CD8-positive, alpha-beta memory T cell (primary cell): ENCODE measurements at regions of chr2 and their contacts with region 1.

Region 1: DNA sequence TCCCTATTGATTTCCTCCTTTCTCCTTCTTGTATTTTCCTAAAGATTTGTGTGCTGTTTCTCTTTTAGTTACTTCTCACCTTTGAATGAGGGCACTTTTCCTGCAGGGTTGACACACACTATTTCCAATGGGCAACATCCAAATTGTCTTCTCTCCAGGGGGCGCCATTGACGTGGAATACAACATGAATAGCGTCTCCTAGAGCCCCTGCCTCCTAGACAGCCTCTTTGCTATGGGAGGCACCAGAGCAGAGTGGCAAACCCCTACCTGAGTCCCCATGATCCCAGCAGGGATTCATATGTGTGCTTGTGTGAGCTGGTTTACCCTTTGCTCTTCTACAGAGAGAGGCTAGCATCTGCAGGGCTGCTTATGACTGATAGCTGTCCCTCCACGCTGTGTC is 61.3 kb upstream of the ITSN2 start:
- DNase-seq: peak; percentile 22 to 66 (median 25)
- H3K4me3 ChIP-seq: no peak overlapping the region
- H3K4me3 Mint-ChIP-seq: no peak overlapping the region
- H3K27ac ChIP-seq: no peak overlapping the region
- H3K27ac Mint-ChIP-seq: no peak overlapping the region
- H3K4me1 ChIP-seq: no peaks in the 10 kb centered on the region
- H3K4me1 Mint-ChIP-seq: no peaks in the 10 kb centered on the region
- H3K27me3 ChIP-seq: no peaks in the 10 kb centered on the region
- H3K27me3 Mint-ChIP-seq: no peaks in the 10 kb centered on the region

Region 2: DNA sequence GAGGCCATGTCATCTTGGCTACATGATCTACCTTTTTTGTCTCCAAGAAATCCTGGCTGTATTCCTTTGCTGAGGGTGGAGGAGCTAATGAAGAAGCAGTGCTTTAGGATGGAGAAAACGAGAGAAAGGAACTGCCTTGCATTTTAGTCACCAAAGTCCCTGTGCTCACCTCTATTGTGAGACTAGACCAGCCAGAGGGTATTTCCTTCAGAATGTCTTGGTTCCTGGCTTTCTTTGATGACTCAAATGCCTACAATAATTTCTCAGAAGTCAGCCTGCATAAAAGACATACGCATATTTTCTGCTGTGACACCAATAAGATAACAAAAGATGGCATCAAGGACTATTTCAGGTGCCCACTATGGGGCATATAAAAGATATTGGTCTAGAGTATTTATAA is 356.3 kb before region 1 on chr2:
- CTCF ChIA-PET with region 1: no interaction called
- POLR2A ChIA-PET with region 1: interaction called, 12 read pairs
- DNase-seq: no peak
- H3K4me3 ChIP-seq: no peak overlapping the region
- H3K4me3 Mint-ChIP-seq: no peak overlapping the region
- H3K27ac ChIP-seq: no peak overlapping the region
- H3K27ac Mint-ChIP-seq: peak overlapping the region in 1 of 8 donors; percentile 50
- H3K4me1 ChIP-seq: no peaks in the 10 kb centered on the region
- H3K4me1 Mint-ChIP-seq: no peaks in the 10 kb centered on the region
- H3K27me3 ChIP-seq: no peaks in the 10 kb centered on the region
- H3K27me3 Mint-ChIP-seq: no peaks in the 10 kb centered on the region

Region 3: DNA sequence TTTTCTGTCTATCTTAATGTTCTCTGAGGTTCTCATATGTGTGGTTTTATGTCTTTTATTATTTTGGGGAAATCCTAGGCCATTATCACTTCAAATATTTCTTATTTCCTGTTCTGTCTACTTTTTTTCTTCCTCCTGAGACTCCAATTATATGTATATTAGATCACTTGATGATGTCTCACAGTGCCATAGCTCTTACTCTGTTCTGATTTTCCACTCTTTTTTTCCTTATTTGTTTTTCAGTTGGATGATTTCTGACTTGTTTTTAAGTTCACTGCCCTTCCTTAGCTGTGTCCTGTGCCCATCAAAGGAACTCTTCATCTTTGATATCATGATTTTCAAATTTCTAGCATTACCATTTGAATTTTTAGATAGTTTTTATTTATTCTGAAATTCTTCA is 274.3 kb before region 1 on chr2:
- CTCF ChIA-PET with region 1: no interaction called
- POLR2A ChIA-PET with region 1: no interaction called
- DNase-seq: no peak
- H3K4me3 ChIP-seq: no peak overlapping the region
- H3K4me3 Mint-ChIP-seq: no peak overlapping the region
- H3K27ac ChIP-seq: no peak overlapping the region
- H3K27ac Mint-ChIP-seq: no peak overlapping the region
- H3K4me1 ChIP-seq: no peaks in the 10 kb centered on the region
- H3K4me1 Mint-ChIP-seq: no peaks in the 10 kb centered on the region
- H3K27me3 ChIP-seq: no peaks in the 10 kb centered on the region
- H3K27me3 Mint-ChIP-seq: no peaks in the 10 kb centered on the region